ENCODE measurements at regions of chr12 and their contacts with region 1.

Region 1: DNA sequence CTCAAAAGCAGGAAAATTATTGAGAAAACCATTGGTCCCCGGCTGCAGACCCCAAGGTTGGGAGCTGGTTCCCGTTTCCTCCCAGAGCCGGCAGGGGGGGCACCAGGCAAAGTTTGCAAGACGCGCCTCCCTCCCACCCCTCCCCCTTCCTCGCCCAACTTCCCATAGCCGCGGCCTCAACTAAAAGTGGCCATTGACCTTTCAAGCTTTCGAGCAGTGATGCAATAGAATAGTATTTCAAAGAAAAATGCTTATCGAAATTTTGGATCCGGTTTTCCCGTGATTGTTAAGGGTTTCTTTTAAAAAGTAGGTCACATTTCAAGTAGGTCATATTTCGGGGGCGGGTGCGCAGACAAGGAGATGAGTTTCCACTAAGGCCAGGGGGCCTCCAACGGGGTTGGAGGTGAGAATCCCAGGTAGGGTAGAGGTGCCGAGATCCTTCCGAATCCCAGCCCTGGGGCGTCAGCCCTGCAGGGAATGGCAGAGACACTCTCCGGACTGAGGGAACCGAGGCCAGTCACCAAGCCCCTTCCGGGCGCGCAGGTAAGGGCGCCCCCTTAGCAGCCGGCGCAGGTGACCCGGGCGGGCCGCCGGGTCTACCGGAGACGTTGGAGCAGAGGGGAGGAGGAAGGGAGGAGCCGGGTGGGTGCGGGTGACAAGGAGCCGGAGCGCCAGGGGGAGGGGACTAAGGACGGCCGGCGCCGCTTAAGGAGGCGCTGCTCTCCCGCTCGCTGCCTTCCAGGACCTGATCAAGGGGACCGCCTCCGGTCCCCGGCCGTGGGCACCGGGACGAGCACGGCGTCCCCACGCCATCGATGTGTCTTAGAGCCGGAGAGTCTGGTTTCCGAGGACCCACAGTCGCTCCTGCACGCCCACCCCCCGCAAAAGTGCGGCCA is 2.6 kb upstream of the SOCS2 start:
- DNase-seq: peak; percentile 16
- H3K4me3 ChIP-seq: peak overlapping the region; percentile 65 to 86 (median 78)
- H3K27ac ChIP-seq: peak overlapping the region; percentile 82 to 96 (median 93)
- H3K4me1 ChIP-seq: peaks cover 12 to 50% (median 18%) of the 10 kb centered on the region in 3 donors
- H3K27me3 ChIP-seq: peaks cover 0 to 34% (median 0%) of the 10 kb centered on the region in 4 donors
- CTCF ChIP-seq: peak; percentile 64 to 83 (median 76)
- POLR2A ChIP-seq: no peak

Region 2: DNA sequence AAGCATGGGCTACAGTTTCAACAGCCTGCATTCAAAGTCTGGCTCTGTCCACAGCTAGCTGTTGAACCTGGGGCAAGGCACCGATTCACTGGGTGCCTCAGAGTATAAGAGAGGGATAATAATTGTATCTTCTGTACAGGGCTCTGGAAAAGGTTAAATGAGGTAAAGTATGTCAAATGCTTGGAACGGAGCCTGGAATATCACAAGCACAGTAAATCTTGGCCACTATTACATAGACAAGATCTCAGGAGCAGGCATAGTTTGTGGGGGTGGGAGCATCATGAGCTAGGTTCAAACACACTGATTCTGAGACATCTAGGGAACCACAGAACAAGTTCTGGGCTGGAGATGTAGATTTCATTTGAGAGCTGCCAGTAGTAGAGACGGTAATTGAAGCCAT is 395.9 kb before region 1 on chr12:
- intact Hi-C with region 1: no loop called
- DNase-seq: no peak
- H3K4me3 ChIP-seq: no peak overlapping the region
- H3K27ac ChIP-seq: peak overlapping the region in 3 of 4 donors; percentile 23 to 66 (median 34)
- H3K4me1 ChIP-seq: peaks cover 9 to 30% (median 9%) of the 10 kb centered on the region in 3 donors
- H3K27me3 ChIP-seq: no peaks in the 10 kb centered on the region
- CTCF ChIP-seq: no peak
- POLR2A ChIP-seq: no peak

Region 3: DNA sequence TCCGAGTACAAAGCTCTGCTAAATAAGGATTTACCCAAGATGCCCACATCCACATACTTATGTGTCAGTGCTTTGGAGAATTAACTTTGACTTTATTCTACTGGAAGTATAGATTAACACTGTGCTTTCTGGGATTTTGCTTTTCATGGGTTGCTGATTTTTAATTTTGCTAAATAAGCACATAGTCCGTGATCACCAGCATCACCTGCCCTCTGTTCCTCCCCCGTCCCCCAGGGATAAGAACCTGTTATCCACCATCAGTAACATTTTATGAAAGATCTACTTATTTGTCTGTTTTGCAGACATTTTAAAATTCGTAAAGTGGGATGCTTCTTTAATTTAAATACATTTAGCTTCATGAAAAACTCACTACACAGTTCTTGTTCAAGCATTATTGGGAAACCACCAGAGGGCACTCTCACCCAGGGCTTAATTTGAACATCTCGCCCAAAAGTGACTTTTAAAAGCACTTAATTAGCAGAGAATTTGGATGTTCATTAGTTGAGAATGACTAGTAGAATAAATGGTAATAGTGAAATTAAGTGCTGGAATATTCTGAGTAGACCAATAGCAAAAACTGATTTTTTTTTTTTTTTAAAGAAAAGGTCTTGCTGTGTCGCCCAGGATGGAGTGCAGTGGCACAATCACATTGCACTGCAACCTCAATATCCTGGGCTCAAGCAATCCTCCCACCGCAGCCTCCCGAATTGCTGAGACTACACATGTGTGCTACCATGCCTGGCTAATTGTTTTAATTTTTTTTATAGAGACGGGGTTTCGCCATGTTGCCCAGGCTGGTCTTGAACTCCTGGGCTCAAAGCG is 66.9 kb before region 1 on chr12:
- intact Hi-C with region 1: loop called (anchors 10 kb)
- DNase-seq: no peak
- H3K4me3 ChIP-seq: no peak overlapping the region
- H3K27ac ChIP-seq: no peak overlapping the region
- H3K4me1 ChIP-seq: no peaks in the 10 kb centered on the region
- H3K27me3 ChIP-seq: no peaks in the 10 kb centered on the region
- CTCF ChIP-seq: peak; percentile 60 to 79 (median 73)
- POLR2A ChIP-seq: no peak

Region 4: GRCh38 chr12:93742110-93742934 is 172.4 kb after region 1 on chr12:
- intact Hi-C with region 1: loop called (anchors 10 kb)
- DNase-seq: no peak
- H3K4me3 ChIP-seq: peak overlapping the region; percentile 51 to 82 (median 62)
- H3K27ac ChIP-seq: peak overlapping the region; percentile 82 to 93 (median 90)
- H3K4me1 ChIP-seq: peaks cover 8 to 79% (median 24%) of the 10 kb centered on the region in 3 donors
- H3K27me3 ChIP-seq: no peaks in the 10 kb centered on the region
- CTCF ChIP-seq: peak; percentile 7 to 45 (median 31)
- POLR2A ChIP-seq: peak in 1 of 4 donors; percentile 12

Region 5: DNA sequence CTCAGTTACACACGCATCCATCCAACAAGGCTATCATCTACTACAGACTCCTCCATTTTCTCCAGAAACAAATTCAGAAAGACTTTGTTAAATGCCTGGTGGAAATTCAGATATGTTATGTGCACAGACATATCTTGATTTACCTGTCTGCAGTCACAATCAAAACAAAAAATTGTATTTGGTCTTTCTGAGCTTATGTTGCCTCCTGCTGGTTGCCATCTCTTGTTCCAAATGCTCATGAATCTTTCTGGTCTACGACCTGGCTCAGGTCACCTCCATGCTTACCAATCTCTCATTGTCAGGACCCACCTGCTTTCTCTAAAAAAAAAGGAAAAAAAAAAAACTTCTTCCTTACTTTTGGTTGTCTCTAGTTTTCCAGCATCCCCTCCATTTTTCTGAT is 409.3 kb after region 1 on chr12:
- intact Hi-C with region 1: loop called (anchors 10 kb)
- DNase-seq: no peak
- H3K4me3 ChIP-seq: no peak overlapping the region
- H3K27ac ChIP-seq: no peak overlapping the region
- H3K4me1 ChIP-seq: peaks cover 0 to 29% (median 5%) of the 10 kb centered on the region in 3 donors
- H3K27me3 ChIP-seq: no peaks in the 10 kb centered on the region
- CTCF ChIP-seq: peak in 5 of 6 experiments; percentile 32 to 60 (median 39)
- POLR2A ChIP-seq: no peak

Region 6: GRCh38 chr12:94101738-94102660 is 532.1 kb after region 1 on chr12:
- intact Hi-C with region 1: loop called (anchors 5 kb)
- DNase-seq: peak; percentile 49
- H3K4me3 ChIP-seq: peak overlapping the region; percentile 32 to 83 (median 56)
- H3K27ac ChIP-seq: peak overlapping the region; percentile 4 to 63 (median 46)
- H3K4me1 ChIP-seq: peaks cover 13 to 26% (median 15%) of the 10 kb centered on the region in 3 donors
- H3K27me3 ChIP-seq: peaks cover 0 to 31% (median 0%) of the 10 kb centered on the region in 4 donors
- CTCF ChIP-seq: peak; percentile 72 to 86 (median 79)
- POLR2A ChIP-seq: no peak